Pancreas (tissue), 10 donors: ENCODE measurements at regions of chr6 and their contacts with region 1.

Region 1: GRCh38 chr6:26122793-26123674 is 35.8 kb downstream of the HFE start:
- DNase-seq: peak; percentile 85 to 97 (median 93)
- ATAC-seq: peak; percentile 71 to 81 (median 78)
- H3K4me3 ChIP-seq: peak overlapping the region; percentile 41 to 88 (median 68)
- H3K27ac ChIP-seq: peak overlapping the region; percentile 83 to 98 (median 96)
- H3K4me1 ChIP-seq: peaks cover 0 to 19% (median 16%) of the 10 kb centered on the region in 3 donors
- H3K27me3 ChIP-seq: no peaks in the 10 kb centered on the region
- CTCF ChIP-seq: no peak

Region 2: GRCh38 chr6:26156076-26156849 is 33.2 kb after region 1 on chr6:
- intact Hi-C with region 1: loop called in 2 of 3 experiments (anchors 2 to 5 kb)
- DNase-seq: peak; percentile 86 to 96 (median 92)
- ATAC-seq: peak; percentile 70 to 80 (median 74)
- H3K4me3 ChIP-seq: peak overlapping the region; percentile 54 to 71 (median 59)
- H3K27ac ChIP-seq: peak overlapping the region; percentile 94 to 97 (median 96)
- H3K4me1 ChIP-seq: peaks cover 0 to 13% (median 5%) of the 10 kb centered on the region in 3 donors
- H3K27me3 ChIP-seq: no peaks in the 10 kb centered on the region
- CTCF ChIP-seq: no peak